Activated naive CD4-positive, alpha-beta T cell treated with anti-CD3 and anti-CD28 coated beads, Interleukin-2, amount 10 ng/mL, durations not matched to agents 7 days and 5 days (primary cell): ENCODE measurements at regions of chr12 and their contacts with region 1.

Region 1: GRCh38 chr12:123905319-123905925 is 67.2 kb downstream of the CCDC92 start:
- DNase-seq: peak; percentile 79
- H3K4me3 Mint-ChIP-seq: no peak overlapping the region
- H3K27ac Mint-ChIP-seq: no peak overlapping the region
- H3K4me1 Mint-ChIP-seq: peaks cover 8% of the 10 kb centered on the region
- H3K27me3 Mint-ChIP-seq: peaks cover 35% of the 10 kb centered on the region

Region 2: GRCh38 chr12:123782997-123783792 is 122.2 kb before region 1 on chr12:
- CTCF ChIA-PET with region 1: no interaction called
- DNase-seq: no peak
- H3K4me3 Mint-ChIP-seq: no peak overlapping the region
- H3K27ac Mint-ChIP-seq: no peak overlapping the region
- H3K4me1 Mint-ChIP-seq: no peaks in the 10 kb centered on the region
- H3K27me3 Mint-ChIP-seq: peaks cover 16% of the 10 kb centered on the region

Region 3: DNA sequence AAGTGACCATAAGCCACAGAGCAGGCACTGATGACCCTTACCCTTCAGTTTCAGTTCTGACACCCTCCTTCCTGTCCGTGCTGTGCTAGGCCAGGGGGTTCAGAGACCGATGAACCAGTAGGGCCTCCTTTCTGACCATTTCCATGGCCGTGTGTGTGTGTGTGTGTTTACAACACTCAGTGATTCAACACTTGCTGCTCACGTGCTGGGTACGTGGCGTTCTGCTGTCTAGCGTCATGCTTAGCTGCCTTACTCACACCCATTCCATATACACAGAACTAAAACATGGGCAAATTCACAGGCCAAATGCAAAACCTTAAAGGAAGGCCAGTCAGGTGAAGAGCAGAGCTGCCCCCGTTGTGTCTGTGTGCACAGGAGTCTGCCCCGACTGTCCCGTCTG is 75.9 kb before region 1 on chr12:
- CTCF ChIA-PET with region 1: no interaction called
- DNase-seq: no peak
- H3K4me3 Mint-ChIP-seq: no peak overlapping the region
- H3K27ac Mint-ChIP-seq: no peak overlapping the region
- H3K4me1 Mint-ChIP-seq: no peaks in the 10 kb centered on the region
- H3K27me3 Mint-ChIP-seq: peaks cover 33% of the 10 kb centered on the region

Region 4: DNA sequence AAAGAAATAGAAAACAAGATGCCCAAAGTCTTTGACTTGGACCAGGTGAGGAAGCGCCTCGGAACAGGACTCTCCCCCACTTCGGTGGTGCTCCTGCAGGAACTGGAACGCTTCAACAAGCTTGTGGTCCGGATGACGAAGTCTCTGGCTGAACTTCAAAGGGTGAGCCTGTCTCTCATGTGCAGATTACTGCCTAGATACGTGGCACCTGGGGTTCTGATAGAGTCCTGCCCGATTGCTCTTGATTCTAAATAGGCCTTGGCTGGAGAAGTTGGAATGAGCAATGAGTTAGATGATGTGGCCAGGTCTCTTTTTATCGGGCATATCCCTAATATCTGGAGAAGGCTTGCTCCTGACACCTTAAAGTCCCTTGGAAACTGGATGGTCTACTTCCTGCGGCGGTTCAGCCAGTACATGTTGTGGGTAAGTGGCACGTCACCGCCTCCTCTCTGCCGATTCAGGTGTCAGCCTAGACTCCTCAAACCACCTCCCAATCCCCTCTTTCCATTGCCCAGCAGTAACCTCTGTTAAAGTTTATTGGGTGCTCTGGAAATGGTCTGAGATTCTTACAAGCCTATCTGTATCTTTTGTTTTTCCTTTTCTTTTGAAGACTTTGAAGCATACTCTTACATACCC is 26.4 kb after region 1 on chr12:
- CTCF ChIA-PET with region 1: interaction called, 13 read pairs
- DNase-seq: peak; percentile 71
- H3K4me3 Mint-ChIP-seq: peak overlapping the region; percentile 5
- H3K27ac Mint-ChIP-seq: peak overlapping the region; percentile 35
- H3K4me1 Mint-ChIP-seq: peaks cover 31% of the 10 kb centered on the region
- H3K27me3 Mint-ChIP-seq: peaks cover 64% of the 10 kb centered on the region

Region 5: GRCh38 chr12:123938679-123939480 is 33.5 kb after region 1 on chr12:
- CTCF ChIA-PET with region 1: interaction called, 15 read pairs
- DNase-seq: no peak
- H3K4me3 Mint-ChIP-seq: peak overlapping the region; percentile 59
- H3K27ac Mint-ChIP-seq: peak overlapping the region; percentile 87
- H3K4me1 Mint-ChIP-seq: peaks cover 27% of the 10 kb centered on the region
- H3K27me3 Mint-ChIP-seq: peaks cover 6% of the 10 kb centered on the region

Region 6: DNA sequence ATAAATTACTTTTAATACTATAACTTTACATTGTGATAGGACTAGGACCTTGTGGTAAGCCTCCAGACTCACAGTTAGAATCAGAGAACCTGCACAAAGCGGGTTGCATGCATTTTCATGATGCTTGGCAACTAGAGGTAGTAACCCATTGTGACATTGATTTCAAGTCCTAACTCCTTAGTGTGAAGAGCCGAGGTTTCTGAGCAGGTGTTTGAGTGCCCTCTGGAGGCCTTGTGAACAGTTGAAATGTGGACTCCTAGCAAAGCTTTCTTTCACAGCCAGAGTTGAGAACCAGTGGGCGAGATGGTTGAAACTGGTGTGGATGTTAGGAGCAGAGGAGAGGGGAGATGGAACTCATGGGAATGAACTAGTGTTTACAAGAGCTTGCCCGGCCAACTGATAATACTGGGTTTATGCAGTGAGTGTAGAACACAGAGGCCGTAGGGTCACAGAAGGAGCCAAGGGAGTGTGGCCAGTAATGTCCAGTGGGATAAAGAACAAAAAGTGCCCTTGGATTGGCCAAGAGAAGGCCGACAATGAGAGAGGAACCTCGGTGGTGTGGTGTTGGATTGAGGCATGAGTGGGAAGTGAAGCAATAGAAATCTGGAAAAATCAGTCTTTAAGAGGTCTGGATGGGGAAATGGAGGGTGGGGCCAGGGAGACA is 78.5 kb after region 1 on chr12:
- CTCF ChIA-PET with region 1: interaction called, 63 read pairs
- DNase-seq: peak; percentile 67
- H3K4me3 Mint-ChIP-seq: no peak overlapping the region
- H3K27ac Mint-ChIP-seq: no peak overlapping the region
- H3K4me1 Mint-ChIP-seq: peaks cover 3% of the 10 kb centered on the region
- H3K27me3 Mint-ChIP-seq: no peaks in the 10 kb centered on the region